ENCODE measurements at regions of chr12 and their contacts with region 1.

Region 1: GRCh38 chr12:98743347-98743953 is 98.4 kb downstream of the APAF1 start:
- DNase-seq: peak; percentile 35
- ATAC-seq: no peak; the same call in 1 of the 2 replicates
- H3K4me3 ChIP-seq: no peak overlapping the region
- H3K27ac ChIP-seq: no peak overlapping the region
- H3K4me1 ChIP-seq: peaks cover 17% of the 10 kb centered on the region
- H3K27me3 ChIP-seq: no peaks in the 10 kb centered on the region
- CTCF ChIP-seq: peak; percentile 78

Region 2: DNA sequence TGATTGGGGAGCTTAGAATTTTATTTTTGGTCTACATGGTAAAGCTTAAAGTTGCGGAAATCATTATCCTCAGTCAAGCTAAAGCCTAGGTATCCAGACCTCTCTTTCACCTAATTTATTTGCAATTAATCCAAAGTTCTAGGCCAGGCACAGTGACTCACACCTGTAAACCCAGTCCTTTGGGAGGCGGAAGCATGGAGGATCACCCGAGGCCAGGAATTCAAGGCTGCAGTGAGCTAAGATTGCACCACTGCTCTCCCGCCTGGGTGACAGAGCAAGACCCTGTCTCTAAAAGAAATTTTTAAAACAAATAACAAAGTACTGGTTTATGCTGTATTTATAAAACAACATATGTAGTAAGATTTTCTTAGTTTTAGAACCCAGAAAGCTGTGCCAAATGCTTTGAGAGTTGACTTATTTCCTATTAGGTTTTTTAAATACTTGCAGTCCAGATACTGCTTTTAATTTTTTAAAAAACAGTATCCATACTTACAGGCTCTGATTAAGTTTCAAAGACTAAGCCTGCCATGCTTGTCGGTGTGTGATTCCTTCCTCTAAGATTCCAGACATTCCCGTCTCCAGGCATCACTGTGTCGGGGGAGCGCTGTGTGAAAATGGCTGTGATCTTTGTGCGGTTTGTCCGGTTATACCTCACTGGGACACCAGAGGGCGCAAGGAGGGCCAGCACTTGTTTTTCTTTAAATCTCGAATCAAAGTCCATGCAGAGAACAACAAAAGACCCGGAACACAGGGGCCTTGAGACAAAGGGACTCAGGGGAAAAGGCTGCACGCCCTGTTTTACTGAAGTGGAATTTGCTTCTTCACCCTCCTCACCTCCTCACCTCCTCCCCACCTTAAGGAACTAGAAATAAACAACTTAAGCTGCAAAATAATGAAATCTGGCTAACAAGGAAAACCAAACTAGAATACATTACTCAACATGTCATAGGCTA is 252.7 kb before region 1 on chr12:
- CTCF ChIA-PET with region 1: no interaction called
- POLR2A ChIA-PET with region 1: no interaction called
- intact Hi-C with region 1: no loop called
- DNase-seq: peak; percentile 90
- ATAC-seq: peak; percentile 90
- H3K4me3 ChIP-seq: peak overlapping the region; percentile 50
- H3K27ac ChIP-seq: peak overlapping the region; percentile 33
- H3K4me1 ChIP-seq: peaks cover 16% of the 10 kb centered on the region
- H3K27me3 ChIP-seq: no peaks in the 10 kb centered on the region
- CTCF ChIP-seq: peak; percentile 87

Region 3: DNA sequence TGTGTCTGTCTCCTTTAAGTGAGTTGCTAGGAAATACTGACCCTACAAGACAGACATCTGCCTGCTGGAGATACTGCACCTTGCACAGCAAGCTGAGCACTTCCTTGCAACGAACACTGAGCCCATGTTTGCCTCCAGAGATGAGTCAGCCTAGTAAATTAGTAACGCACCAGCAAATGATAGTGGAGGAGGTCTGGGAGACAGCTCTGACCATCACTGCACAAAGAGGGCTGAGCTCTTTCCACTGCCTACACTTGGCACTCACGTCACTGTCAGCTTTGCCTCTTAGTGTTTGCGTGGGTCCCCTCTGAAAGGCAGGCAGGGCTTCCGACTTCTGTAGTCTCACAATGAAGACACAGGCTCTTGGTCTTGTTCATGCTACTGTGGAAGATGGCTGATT is 10.6 kb after region 1 on chr12:
- CTCF ChIA-PET with region 1: no interaction called
- POLR2A ChIA-PET with region 1: interaction called, 10 read pairs
- intact Hi-C with region 1: no loop called
- DNase-seq: peak; percentile 94
- ATAC-seq: peak; percentile 96
- H3K4me3 ChIP-seq: no peak overlapping the region
- H3K27ac ChIP-seq: peak overlapping the region; percentile 95
- H3K4me1 ChIP-seq: peaks cover 36% of the 10 kb centered on the region
- H3K27me3 ChIP-seq: no peaks in the 10 kb centered on the region
- CTCF ChIP-seq: no peak

Region 4: GRCh38 chr12:98803468-98804209 is 60.2 kb after region 1 on chr12:
- CTCF ChIA-PET with region 1: no interaction called
- POLR2A ChIA-PET with region 1: no interaction called
- intact Hi-C with region 1: loop called (anchors 5 kb)
- DNase-seq: no peak
- ATAC-seq: no peak
- H3K4me3 ChIP-seq: no peak overlapping the region
- H3K27ac ChIP-seq: no peak overlapping the region
- H3K4me1 ChIP-seq: peaks cover 7% of the 10 kb centered on the region; the same call in 1 of the 2 replicates
- H3K27me3 ChIP-seq: peaks cover 13% of the 10 kb centered on the region; the same call in 1 of the 2 replicates
- CTCF ChIP-seq: peak; percentile 38; the same call in 1 of the 2 replicates

Region 5: DNA sequence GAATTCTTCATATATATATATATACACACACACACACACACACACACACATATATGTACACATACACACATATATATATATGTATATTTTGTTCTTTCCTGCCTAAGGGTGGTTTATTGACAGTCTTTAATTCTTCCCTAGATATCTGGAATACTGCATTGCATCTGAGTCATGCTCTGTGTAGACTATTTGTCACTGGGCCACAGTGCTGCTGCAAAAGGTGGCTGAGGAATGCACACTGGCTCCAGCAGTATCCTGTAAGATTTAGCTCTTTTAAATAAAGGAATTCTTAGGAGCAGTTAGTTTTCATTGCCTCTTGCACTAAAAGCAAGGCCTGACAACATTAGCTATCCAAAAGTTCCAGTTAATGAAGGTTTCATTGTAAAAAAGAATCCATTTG is 102.5 kb after region 1 on chr12:
- CTCF ChIA-PET with region 1: no interaction called
- POLR2A ChIA-PET with region 1: interaction called, 19 read pairs
- intact Hi-C with region 1: no loop called
- DNase-seq: peak; percentile 48
- ATAC-seq: peak; percentile 89
- H3K4me3 ChIP-seq: no peak overlapping the region
- H3K27ac ChIP-seq: no peak overlapping the region
- H3K4me1 ChIP-seq: no peaks in the 10 kb centered on the region
- H3K27me3 ChIP-seq: peaks cover 30% of the 10 kb centered on the region
- CTCF ChIP-seq: no peak